Calu3 (cell line): ENCODE measurements at regions of chr2 and their contacts with region 1.

Region 1: DNA sequence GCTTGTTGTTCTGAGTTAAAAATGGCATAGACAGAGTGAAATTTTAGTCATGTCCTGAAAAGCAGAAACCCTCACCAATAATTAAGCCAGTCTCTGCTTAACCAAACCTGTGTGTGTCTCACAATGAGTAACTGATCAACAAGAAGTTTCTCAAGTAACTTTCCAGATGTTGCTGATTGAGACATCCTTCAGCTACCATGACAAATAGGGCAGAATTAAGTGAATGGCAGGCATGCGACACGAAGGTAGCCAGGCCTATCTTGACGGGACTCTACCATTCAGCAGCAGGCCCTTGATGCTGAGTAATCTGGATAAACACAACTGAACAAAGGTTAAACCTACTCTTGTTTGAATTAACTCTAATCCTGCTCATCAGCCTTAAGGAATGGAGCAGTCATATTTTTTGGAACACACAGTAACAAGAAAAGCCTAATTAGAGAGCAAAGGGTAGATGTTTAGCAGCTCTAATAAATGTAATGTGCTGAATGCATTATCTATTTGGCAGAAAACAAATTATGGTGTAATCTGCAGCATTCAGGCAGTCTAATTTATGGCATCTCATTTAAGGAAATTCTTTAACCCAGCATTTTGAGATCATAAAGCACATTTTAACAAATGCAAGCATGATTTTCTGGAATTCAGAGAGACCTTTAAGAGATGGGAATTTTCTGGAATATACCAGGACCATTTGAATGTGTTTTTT is 159.5 kb upstream of the EPHA4 start:
- DNase-seq: no peak
- H3K4me3 Mint-ChIP-seq: no peak overlapping the region
- H3K27ac Mint-ChIP-seq: no peak overlapping the region
- H3K4me1 Mint-ChIP-seq: peaks cover 19% of the 10 kb centered on the region
- H3K27me3 Mint-ChIP-seq: no peaks in the 10 kb centered on the region
- CTCF ChIP-seq: no peak

Region 2: DNA sequence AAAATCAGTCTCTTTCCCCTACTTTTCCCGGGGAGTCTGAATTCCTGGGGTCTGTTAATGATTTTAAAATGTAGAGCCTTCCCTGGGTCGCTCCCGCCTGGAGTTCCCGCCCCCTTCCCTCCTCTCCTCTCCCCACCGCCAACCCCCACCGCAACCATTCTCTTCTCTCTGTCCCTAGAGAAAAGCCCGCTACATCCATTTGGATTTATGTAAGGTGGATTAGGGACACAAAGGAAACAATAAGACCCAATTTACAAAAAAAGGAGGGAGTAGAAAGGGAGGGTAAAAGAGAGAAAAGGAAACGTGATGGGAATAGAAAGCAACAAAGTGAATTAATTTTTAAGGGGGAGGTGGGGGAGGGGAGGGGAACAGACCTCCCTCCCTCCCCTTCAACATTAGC is 161.7 kb before region 1 on chr2:
- CTCF ChIA-PET with region 1: no interaction called
- intact Hi-C with region 1: no loop called
- DNase-seq: no peak
- H3K4me3 Mint-ChIP-seq: no peak overlapping the region
- H3K27ac Mint-ChIP-seq: no peak overlapping the region
- H3K4me1 Mint-ChIP-seq: peaks cover 23% of the 10 kb centered on the region
- H3K27me3 Mint-ChIP-seq: peaks cover 23% of the 10 kb centered on the region
- CTCF ChIP-seq: no peak

Region 3: GRCh38 chr2:221606424-221606823 is 125.2 kb before region 1 on chr2:
- CTCF ChIA-PET with region 1: no interaction called
- intact Hi-C with region 1: no loop called
- DNase-seq: no peak
- H3K4me3 Mint-ChIP-seq: no peak overlapping the region
- H3K27ac Mint-ChIP-seq: no peak overlapping the region
- H3K4me1 Mint-ChIP-seq: no peaks in the 10 kb centered on the region
- H3K27me3 Mint-ChIP-seq: no peaks in the 10 kb centered on the region
- CTCF ChIP-seq: no peak

Region 4: GRCh38 chr2:221792971-221793521 is 61.5 kb after region 1 on chr2:
- CTCF ChIA-PET with region 1: no interaction called
- intact Hi-C with region 1: loop called (anchors 2 kb)
- DNase-seq: peak; percentile 34
- H3K4me3 Mint-ChIP-seq: no peak overlapping the region
- H3K27ac Mint-ChIP-seq: peak overlapping the region; percentile 30
- H3K4me1 Mint-ChIP-seq: peaks cover 40% of the 10 kb centered on the region
- H3K27me3 Mint-ChIP-seq: no peaks in the 10 kb centered on the region
- CTCF ChIP-seq: no peak